Endothelial cell of umbilical vein (primary cell): ENCODE measurements at regions of chr16 and their contacts with region 1.

Region 1: GRCh38 chr16:27179500-27180072 is 23.7 kb upstream of the KDM8 start:
- DNase-seq: peak; percentile 77
- H3K4me3 ChIP-seq: no peak overlapping the region
- H3K27ac ChIP-seq: no peak overlapping the region
- H3K4me1 ChIP-seq: peaks cover 18% of the 10 kb centered on the region
- H3K27me3 ChIP-seq: peaks cover 10% of the 10 kb centered on the region in 2 experiments
- CTCF ChIP-seq: peak; percentile 94 to 97
- POLR2A ChIP-seq: no peak

Region 2: DNA sequence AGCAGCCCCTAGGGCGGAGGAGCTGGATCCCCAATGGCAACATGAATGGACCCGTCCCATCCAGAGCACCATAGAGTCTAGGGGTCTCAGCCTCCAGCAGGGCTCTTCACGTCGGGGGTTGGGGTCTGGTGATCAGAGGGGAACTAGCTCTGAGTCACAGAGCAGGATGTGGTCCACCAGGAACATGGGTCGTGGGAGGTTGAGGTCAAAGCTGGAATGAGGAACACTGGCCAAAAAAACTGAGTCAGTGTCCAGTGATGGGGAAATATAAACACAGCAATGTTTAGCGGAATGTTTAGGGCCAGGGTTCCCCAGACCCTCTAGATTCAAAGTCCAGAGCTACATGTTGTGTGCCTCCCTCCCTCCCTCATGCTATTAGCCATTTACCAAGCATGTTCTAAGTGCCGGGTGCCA is 192.0 kb before region 1 on chr16:
- CTCF ChIA-PET with region 1: no interaction called
- POLR2A ChIA-PET with region 1: no interaction called
- dilution Hi-C with region 1: no loop called
- intact Hi-C with region 1: no loop called
- DNase-seq: no peak
- H3K4me3 ChIP-seq: no peak overlapping the region
- H3K27ac ChIP-seq: no peak overlapping the region
- H3K4me1 ChIP-seq: no peaks in the 10 kb centered on the region
- H3K27me3 ChIP-seq: no peaks in the 10 kb centered on the region
- CTCF ChIP-seq: no peak
- POLR2A ChIP-seq: no peak

Region 3: DNA sequence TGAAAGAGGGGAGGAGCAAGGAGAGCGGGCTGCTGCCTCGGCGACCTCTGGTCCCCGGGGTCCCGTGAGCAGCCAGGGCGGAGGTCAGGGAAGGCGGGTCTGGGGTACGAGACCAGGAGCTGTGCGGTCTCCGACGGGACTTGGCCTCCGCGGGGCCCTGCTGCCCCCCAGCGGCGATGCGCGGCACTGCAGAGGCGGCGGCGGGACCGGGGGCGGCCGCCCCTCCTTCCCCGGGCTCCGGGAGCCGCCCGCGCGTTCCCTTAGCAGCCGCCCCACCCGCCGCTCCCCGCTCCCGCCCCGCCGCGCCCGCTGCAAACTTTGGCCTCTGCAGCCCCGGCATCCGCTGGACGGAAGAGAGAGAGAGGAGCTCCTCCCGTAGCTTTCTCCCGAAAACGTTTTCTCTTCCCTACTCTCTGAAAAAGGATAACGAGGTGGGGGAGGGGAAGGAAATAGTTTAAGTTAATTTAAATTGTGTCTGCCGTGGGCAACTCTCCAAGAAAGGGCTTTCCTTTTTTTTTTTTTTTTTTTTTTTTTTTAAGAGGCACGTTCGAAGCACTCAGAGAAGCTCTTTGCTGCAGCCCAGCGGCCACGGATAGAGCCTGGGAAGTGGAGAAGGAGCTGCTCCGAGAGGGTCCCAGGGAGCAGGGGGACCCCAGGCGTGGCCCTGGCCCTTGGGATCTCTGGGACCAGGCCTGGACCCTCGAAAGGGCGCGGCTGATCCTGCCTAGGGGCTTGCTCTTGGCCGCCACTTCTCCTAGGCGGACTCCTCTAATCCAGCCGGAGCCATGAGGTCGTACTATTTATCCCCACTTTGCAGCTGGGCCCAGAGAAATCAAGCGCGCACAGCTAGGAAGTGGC is 69.7 kb before region 1 on chr16:
- CTCF ChIA-PET with region 1: interaction called, 10 read pairs
- POLR2A ChIA-PET with region 1: no interaction called
- dilution Hi-C with region 1: no loop called
- intact Hi-C with region 1: no loop called
- DNase-seq: peak; percentile 62
- H3K4me3 ChIP-seq: peak overlapping the region in 2 of 3 experiments; percentile 16 to 22
- H3K27ac ChIP-seq: no peak overlapping the region
- H3K4me1 ChIP-seq: no peaks in the 10 kb centered on the region
- H3K27me3 ChIP-seq: no peaks in the 10 kb centered on the region
- CTCF ChIP-seq: peak; percentile 72 to 88
- POLR2A ChIP-seq: no peak

Region 4: DNA sequence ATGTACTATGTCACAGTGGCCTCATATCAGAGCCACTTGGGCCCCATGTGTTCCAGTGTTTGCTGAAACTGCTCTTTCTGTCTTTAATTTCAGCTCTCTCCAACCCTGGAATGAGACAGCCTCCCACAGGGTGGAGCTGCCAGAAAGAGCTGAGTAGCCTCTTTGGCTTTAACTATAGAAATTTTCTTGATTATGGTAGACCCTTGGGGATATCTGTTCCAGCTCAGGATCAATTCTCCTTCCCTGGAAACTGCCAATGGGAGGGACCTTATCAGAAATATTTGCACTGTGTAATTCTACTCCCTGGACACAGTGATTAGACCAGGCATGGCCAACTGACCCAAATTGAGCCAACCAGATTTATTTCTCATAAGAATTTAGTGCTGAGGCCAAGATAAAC is 15.2 kb before region 1 on chr16:
- CTCF ChIA-PET with region 1: interaction called, 27 read pairs
- POLR2A ChIA-PET with region 1: no interaction called
- dilution Hi-C with region 1: no loop called
- intact Hi-C with region 1: no loop called
- DNase-seq: no peak
- H3K4me3 ChIP-seq: no peak overlapping the region
- H3K27ac ChIP-seq: no peak overlapping the region
- H3K4me1 ChIP-seq: no peaks in the 10 kb centered on the region
- H3K27me3 ChIP-seq: peaks cover 0 to 1% of the 10 kb centered on the region in 2 experiments
- CTCF ChIP-seq: no peak
- POLR2A ChIP-seq: no peak

Region 5: GRCh38 chr16:27355610-27356009 is 176.0 kb after region 1 on chr16:
- CTCF ChIA-PET with region 1: interaction called, 16 read pairs
- POLR2A ChIA-PET with region 1: no interaction called
- dilution Hi-C with region 1: no loop called
- intact Hi-C with region 1: no loop called
- DNase-seq: peak; percentile 46
- H3K4me3 ChIP-seq: no peak overlapping the region
- H3K27ac ChIP-seq: no peak overlapping the region
- H3K4me1 ChIP-seq: peaks cover 7% of the 10 kb centered on the region
- H3K27me3 ChIP-seq: no peaks in the 10 kb centered on the region
- CTCF ChIP-seq: peak; percentile 44 to 58
- POLR2A ChIP-seq: no peak

Region 6: DNA sequence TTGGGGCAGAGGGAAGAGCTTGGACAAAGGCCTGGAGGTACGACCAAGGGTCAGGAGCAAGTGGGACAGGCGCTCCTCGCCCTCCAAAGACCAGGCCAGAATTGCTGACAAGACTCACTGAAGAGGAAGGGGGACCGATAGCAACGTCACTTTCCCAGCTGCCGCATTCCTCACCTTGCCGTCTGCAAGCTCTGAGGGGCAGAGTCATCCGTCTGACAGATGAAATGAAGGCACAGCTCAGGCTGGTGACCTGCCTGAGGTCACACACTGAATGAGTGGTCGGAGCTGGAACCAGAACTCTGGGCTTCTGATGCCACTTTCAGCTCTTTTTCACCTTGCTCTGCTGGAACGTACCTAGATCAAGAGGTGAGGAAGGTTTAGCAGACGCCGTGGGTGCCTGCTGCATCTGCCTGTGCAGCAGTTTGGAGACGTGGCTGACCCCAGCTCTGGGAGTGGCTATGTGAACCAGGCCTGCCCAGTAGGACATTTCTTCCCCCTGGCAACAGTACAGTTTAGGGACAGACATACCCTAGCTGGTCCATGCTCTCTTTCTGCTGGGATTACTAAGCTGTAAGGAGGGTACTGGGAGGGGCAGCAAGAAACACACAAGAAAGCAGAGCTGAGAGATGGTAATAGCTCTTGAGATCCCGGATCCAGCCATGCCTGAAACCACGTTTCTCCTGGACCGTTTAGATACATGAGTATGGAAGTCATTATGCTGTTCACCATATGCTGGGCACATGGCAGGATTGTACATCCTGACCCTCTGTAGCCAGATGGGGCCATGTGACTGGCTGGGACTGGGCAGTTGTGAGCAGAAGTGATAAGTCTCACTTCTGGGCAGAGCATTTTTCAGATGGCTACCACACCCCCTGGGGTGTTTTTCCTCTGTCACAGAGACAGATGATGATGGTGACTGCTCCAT is 273.2 kb after region 1 on chr16:
- CTCF ChIA-PET with region 1: interaction called, 11 read pairs
- POLR2A ChIA-PET with region 1: no interaction called
- dilution Hi-C with region 1: no loop called
- intact Hi-C with region 1: loop called (anchors 1 kb)
- DNase-seq: no peak
- H3K4me3 ChIP-seq: no peak overlapping the region
- H3K27ac ChIP-seq: no peak overlapping the region
- H3K4me1 ChIP-seq: peaks cover 29% of the 10 kb centered on the region
- H3K27me3 ChIP-seq: no peaks in the 10 kb centered on the region
- CTCF ChIP-seq: no peak
- POLR2A ChIP-seq: no peak